ENCODE measurements at regions of chr20 and their contacts with region 1.

Region 1: GRCh38 chr20:50197471-50198179 is 7.0 kb downstream of the CEBPB start:
- DNase-seq: no peak
- ATAC-seq: peak; percentile 18
- H3K4me3 ChIP-seq: no peak overlapping the region
- H3K27ac ChIP-seq: no peak overlapping the region
- H3K4me1 ChIP-seq: peaks cover 39% of the 10 kb centered on the region
- H3K27me3 ChIP-seq: peaks cover 0 to 7% of the 10 kb centered on the region in 2 experiments; a peak in 3 of 5 replicates
- CTCF ChIP-seq: no peak
- EP300 ChIP-seq: no peak
- POLR2A ChIP-seq: no peak
- RAD21 ChIP-seq: no peak

Region 2: GRCh38 chr20:50267041-50267865 is 69.6 kb after region 1 on chr20:
- CTCF ChIA-PET with region 1: no interaction called
- POLR2A ChIA-PET with region 1: interaction called, 3 read pairs
- in situ Hi-C with region 1: loop called (anchors 5 kb)
- intact Hi-C with region 1: loop called (anchors 2 kb)
- DNase-seq: peak; percentile 79
- ATAC-seq: peak; percentile 51
- H3K4me3 ChIP-seq: peak overlapping the region in 2 of 3 experiments; percentile 19 to 64; a peak in 4 of 6 replicates
- H3K27ac ChIP-seq: no peak overlapping the region
- H3K4me1 ChIP-seq: peaks cover 82% of the 10 kb centered on the region
- H3K27me3 ChIP-seq: peaks cover 3 to 17% of the 10 kb centered on the region in 2 experiments; a peak in 4 of 5 replicates
- CTCF ChIP-seq: 0 out of 2 replicates have a peak, but pooled peaks have one; percentile 19
- EP300 ChIP-seq: peak; percentile 25 to 56; a peak in 2 of 4 replicates
- POLR2A ChIP-seq: no peak
- RAD21 ChIP-seq: no peak